Activated naive CD4-positive, alpha-beta T cell treated with anti-CD3 and anti-CD28 coated beads for 36 hours (primary cell): ENCODE measurements at regions of chr3 and their contacts with region 1.

Region 1: DNA sequence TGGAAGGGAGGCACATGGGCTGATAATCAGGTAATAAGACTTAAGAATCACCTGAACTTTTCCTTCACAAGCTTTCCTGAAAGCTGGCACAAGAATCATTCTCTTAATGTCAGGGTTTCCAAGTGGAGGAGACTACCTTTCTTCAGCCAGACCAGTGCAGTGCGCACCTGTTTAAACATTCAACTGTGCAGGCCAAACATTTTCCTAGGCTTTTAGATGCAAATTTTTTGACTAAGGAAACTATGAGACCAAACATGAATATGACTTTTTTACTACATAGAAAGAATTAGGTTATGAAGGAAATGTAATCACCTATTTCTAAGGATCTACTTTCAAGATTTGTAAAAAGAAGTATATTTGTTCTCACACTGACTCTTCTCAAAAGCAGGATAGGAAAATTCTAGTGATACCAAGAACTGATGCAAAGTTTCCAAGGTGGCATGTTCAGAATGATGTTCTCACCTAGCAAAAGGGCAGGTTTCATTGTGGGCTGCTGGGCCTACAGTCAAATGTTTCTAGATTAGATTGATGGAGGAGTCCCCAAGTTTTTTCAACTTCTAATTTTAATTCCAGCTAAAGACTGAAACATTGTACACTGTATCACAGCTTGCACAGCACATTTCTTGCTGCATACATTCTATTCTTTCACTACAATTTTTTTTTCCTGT is 339.1 kb downstream of the TIGIT start:
- DNase-seq: peak; percentile 60
- H3K4me3 Mint-ChIP-seq: no peak overlapping the region
- H3K27ac Mint-ChIP-seq: peak overlapping the region; percentile 38
- H3K4me1 Mint-ChIP-seq: peaks cover 17% of the 10 kb centered on the region
- H3K27me3 Mint-ChIP-seq: no peaks in the 10 kb centered on the region

Region 2: DNA sequence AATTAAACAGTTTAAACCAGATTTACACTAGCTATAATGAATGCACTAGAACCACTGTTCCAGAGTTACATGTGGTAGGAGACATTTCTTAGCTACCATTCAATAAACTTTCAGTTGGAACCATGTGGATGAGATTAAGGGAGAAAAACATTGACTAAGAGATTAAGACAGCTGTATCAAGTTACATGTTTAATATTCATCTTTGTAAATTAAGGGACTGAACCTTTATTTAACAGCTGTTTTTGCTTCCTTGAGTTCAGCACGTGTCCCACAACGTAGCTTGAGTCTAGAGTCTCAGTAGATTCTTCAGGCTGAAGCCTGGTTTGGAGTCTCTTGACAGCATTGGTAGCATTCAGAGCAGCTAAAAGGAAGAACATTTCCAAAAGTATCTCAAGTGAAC is 1164.4 kb before region 1 on chr3:
- CTCF ChIA-PET with region 1: no interaction called
- intact Hi-C with region 1: no loop called
- DNase-seq: no peak
- H3K4me3 Mint-ChIP-seq: no peak overlapping the region
- H3K27ac Mint-ChIP-seq: no peak overlapping the region
- H3K4me1 Mint-ChIP-seq: no peaks in the 10 kb centered on the region
- H3K27me3 Mint-ChIP-seq: no peaks in the 10 kb centered on the region

Region 3: GRCh38 chr3:114494498-114494897 is 138.4 kb before region 1 on chr3:
- CTCF ChIA-PET with region 1: no interaction called
- intact Hi-C with region 1: no loop called
- DNase-seq: peak; percentile 18
- H3K4me3 Mint-ChIP-seq: no peak overlapping the region
- H3K27ac Mint-ChIP-seq: peak overlapping the region; percentile 6
- H3K4me1 Mint-ChIP-seq: peaks cover 13% of the 10 kb centered on the region
- H3K27me3 Mint-ChIP-seq: peaks cover 2% of the 10 kb centered on the region

Region 4: GRCh38 chr3:114504941-114505632 is 127.8 kb before region 1 on chr3:
- CTCF ChIA-PET with region 1: no interaction called
- intact Hi-C with region 1: loop called (anchors 1 kb)
- DNase-seq: peak; percentile 12
- H3K4me3 Mint-ChIP-seq: no peak overlapping the region
- H3K27ac Mint-ChIP-seq: no peak overlapping the region
- H3K4me1 Mint-ChIP-seq: peaks cover 44% of the 10 kb centered on the region
- H3K27me3 Mint-ChIP-seq: peaks cover 17% of the 10 kb centered on the region

Region 5: DNA sequence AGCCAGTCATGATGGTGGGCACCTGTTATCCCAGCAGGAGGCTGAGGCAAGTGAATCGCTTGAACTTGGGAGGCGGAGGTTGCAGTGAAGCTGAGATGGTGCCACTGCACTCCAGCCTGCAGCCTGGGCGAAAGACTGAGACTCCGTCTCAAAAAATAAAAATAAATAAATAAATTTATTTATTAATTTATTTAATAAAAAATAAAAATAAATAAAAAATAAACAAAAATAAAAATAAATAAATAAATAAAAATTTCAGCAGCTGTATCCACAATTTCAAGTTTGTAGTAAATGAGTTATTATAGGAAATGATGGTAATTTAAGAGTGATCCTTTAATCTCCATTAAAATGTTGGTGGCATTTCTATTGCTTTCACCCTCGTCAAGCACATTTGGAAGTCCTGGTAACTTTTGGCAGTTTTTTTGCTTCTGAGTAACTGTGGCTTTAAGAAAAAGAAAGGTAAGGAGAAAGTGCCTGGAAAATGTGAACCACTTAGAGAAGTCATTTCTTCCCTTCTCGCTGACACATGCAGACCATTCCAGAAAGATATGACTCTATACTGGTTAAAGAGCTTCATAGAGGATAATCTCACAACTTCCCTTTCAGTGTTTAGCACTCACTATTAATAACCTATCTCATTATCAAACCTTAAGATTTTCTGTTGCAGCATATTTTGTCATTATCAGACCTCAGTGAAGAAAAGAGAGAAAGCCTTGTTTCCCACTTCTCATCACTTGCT is 42.4 kb before region 1 on chr3:
- CTCF ChIA-PET with region 1: no interaction called
- intact Hi-C with region 1: loop called (anchors 2 kb)
- DNase-seq: no peak
- H3K4me3 Mint-ChIP-seq: no peak overlapping the region
- H3K27ac Mint-ChIP-seq: no peak overlapping the region
- H3K4me1 Mint-ChIP-seq: peaks cover 12% of the 10 kb centered on the region
- H3K27me3 Mint-ChIP-seq: no peaks in the 10 kb centered on the region

Region 6: DNA sequence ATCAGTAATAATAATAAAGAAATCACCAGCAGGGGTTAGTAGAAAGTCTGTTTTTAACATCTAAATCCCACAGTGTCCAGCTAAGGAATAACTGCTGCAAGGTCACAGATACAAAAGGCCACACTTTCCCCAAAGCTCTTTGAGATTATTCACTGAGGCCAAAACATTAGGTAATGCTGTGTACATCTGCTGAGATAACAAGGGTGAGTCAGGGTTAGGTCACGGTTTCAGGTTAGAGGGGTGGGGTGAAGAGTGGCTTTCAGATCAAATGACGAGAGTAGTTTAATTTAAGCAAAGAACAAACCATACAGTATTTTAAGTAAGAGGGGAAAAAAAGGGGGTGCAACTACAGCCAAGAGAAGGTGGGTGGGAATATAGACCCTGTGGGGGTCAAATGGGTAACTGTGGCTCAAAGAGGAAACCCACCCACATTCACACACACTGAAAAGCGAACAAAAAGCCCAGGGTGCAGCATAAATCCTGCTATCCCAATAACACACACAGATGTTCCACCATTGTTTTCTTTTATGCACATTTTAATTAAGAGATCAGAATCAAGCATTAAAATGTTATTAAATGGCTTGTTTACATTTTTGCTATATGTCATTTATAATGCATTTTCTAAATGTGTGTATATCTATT is 73.8 kb after region 1 on chr3:
- CTCF ChIA-PET with region 1: no interaction called
- intact Hi-C with region 1: loop called (anchors 1 kb)
- DNase-seq: peak; percentile 66
- H3K4me3 Mint-ChIP-seq: no peak overlapping the region
- H3K27ac Mint-ChIP-seq: no peak overlapping the region
- H3K4me1 Mint-ChIP-seq: peaks cover 11% of the 10 kb centered on the region
- H3K27me3 Mint-ChIP-seq: no peaks in the 10 kb centered on the region

Region 7: DNA sequence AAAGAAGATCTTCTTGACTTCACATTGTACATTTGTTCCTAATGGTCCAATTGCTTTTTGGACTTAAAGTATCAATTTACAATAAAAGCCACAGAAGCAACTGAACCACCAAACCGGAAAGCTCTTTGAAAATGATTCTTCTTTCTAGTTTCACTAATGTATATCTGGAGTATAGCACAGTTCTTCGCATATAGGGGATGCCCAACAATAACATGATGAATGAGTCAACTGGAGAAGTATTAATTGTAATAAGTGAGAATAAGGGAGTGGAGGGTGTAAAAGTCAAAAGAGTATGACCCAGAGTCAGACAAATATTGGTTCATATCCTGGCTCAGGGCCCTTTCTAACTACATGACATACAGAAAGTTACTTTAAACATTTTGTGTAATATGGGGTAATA is 89.0 kb after region 1 on chr3:
- CTCF ChIA-PET with region 1: interaction called, 6 read pairs
- intact Hi-C with region 1: loop called (anchors 1 kb)
- DNase-seq: no peak
- H3K4me3 Mint-ChIP-seq: no peak overlapping the region
- H3K27ac Mint-ChIP-seq: no peak overlapping the region
- H3K4me1 Mint-ChIP-seq: peaks cover 23% of the 10 kb centered on the region
- H3K27me3 Mint-ChIP-seq: no peaks in the 10 kb centered on the region

Region 8: DNA sequence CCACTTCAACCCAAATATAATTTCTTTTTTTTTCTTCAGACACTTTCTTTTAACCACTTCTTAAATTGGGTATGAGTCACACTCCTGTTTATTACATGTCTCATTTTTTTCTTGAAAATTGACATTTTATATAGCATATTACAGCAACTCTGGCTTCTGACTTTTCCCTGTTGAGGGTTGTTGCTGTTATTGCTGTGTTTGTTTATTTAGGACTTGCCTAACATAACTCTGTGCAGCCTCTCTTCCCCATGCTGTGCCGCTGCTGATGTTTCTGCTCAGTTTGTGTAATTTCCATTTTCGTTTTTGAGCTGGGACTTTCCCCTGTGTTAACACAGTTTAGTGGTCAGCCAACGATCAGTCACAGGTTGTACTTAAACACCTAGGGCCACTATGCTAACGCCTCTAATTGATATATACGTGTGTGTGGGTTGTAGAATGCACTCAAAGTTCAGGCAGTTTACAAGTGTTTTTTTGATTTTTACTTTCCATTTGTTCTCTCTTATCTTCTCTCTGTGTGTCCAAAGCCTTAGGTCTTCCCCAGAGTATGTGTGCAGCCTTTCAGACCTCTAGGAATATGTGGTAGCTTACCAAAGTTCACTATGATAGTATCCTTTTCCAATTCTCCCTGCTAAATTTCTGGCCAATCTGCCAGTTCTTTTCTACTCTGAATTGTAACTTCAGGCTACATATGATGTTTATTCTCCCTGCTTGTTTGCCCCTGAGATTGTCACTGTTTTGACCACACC is 176.9 kb after region 1 on chr3:
- CTCF ChIA-PET with region 1: no interaction called
- intact Hi-C with region 1: no loop called
- DNase-seq: peak; percentile 6
- H3K4me3 Mint-ChIP-seq: no peak overlapping the region
- H3K27ac Mint-ChIP-seq: no peak overlapping the region
- H3K4me1 Mint-ChIP-seq: peaks cover 7% of the 10 kb centered on the region
- H3K27me3 Mint-ChIP-seq: no peaks in the 10 kb centered on the region